Activated CD4-positive, alpha-beta memory T cell treated with anti-CD3 and anti-CD28 coated beads, Interleukin-2, amount 10 ng/mL, durations not matched to agents 7 days and 5 days (primary cell): ENCODE measurements at regions of chr1 and their contacts with region 1.

Region 1: GRCh38 chr1:150106341-150106740 is 38.8 kb downstream of the VPS45 start:
- DNase-seq: no peak
- H3K4me3 Mint-ChIP-seq: peak overlapping the region; percentile 35
- H3K27ac Mint-ChIP-seq: peak overlapping the region; percentile 80
- H3K4me1 Mint-ChIP-seq: peaks cover 59% of the 10 kb centered on the region
- H3K27me3 Mint-ChIP-seq: no peaks in the 10 kb centered on the region

Region 2: DNA sequence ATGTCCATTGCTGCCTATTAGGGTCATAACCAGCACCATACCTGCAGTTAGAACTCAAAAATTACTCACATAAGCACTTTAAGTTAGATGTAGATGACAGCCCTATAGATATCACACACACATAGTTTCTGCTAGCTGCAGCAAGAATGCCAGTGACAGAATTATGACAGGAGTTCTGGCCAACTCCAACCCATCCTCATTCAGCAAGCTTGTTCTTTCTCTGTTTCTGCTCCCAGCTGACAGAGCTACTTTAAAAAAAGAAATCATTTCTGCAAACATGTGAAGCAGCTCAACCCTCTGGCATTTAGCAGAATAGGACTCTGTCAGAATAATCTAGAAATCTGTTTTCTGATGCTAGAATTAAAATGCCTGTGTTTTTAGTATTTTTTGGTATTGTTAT is 72.0 kb before region 1 on chr1:
- CTCF ChIA-PET with region 1: no interaction called
- POLR2A ChIA-PET with region 1: no interaction called
- DNase-seq: no peak
- H3K4me3 Mint-ChIP-seq: no peak overlapping the region
- H3K27ac Mint-ChIP-seq: no peak overlapping the region
- H3K4me1 Mint-ChIP-seq: no peaks in the 10 kb centered on the region
- H3K27me3 Mint-ChIP-seq: peaks cover 10% of the 10 kb centered on the region

Region 3: DNA sequence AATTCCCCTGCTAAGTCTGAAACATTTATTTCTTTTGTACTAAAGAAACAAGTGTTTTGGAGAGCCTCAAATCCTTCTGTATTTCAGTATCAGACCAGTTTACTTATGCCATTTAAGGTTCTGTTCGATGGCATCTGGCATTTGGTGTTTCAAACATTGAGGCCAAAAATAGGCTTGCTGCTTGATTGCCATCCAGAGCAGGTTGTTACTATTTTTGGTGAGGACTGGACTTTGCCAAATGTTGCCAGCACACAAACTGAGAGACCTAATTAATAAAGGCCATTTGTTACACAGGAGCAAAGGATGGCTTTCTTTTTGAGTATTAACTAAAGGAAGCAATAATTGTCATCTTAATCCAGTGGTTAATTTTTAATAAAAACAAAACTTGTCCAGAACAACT is 12.5 kb before region 1 on chr1:
- CTCF ChIA-PET with region 1: interaction called, 6 read pairs
- POLR2A ChIA-PET with region 1: interaction called, 37 read pairs
- DNase-seq: no peak
- H3K4me3 Mint-ChIP-seq: no peak overlapping the region
- H3K27ac Mint-ChIP-seq: peak overlapping the region; percentile 53
- H3K4me1 Mint-ChIP-seq: peaks cover 39% of the 10 kb centered on the region
- H3K27me3 Mint-ChIP-seq: no peaks in the 10 kb centered on the region

Region 4: GRCh38 chr1:150149271-150150132 is 43.2 kb after region 1 on chr1 and contains the start of gene PLEKHO1:
- CTCF ChIA-PET with region 1: interaction called, 8 read pairs
- POLR2A ChIA-PET with region 1: interaction called, 63 read pairs
- DNase-seq: peak; percentile 87
- H3K4me3 Mint-ChIP-seq: peak within 1 kb of the TSS; percentile 86
- H3K27ac Mint-ChIP-seq: peak within 1 kb of the TSS; percentile 93
- H3K4me1 Mint-ChIP-seq: peaks cover 66% of the 10 kb centered on the region
- H3K27me3 Mint-ChIP-seq: peaks cover 1% of the 10 kb centered on the region
- total RNA-seq, gene PLEKHO1: 89.8 to 92.9 TPM

Region 5: DNA sequence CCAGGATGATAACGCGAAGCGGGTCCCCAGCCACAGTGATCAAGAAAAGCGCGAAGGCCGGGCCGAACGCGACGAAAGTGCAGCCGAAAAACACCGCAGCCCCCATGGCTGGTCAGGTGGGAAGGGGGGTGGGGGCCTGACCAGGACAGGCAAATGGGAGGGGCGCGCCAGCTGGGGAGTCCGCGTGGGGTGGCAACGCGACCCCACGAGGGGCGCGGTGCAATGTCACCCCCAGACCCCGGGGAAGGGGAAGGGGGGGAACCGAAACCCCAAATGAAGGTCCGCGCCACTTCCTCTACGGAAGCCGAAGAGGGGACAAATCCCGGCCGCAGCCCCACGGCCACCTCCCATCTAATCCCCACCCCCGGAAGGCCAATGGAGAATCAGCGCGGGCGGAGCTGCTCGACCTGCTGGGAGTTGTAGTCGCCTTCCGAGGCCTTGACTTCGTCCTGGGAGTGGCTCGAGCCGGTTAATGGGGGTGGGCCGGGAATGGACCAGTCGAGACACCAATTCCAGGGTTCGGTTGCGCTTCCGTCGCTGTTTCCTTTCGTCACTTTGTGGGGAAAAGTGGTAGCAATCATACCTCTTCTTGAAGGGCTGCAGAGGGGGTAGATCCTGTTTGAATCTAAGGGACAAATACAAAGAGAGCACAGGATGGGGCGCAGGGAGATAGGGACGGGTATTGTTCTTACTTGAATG is 162.5 kb after region 1 on chr1 and contains the start of gene APH1A:
- CTCF ChIA-PET with region 1: no interaction called
- POLR2A ChIA-PET with region 1: no interaction called
- DNase-seq: peak; percentile 95
- H3K4me3 Mint-ChIP-seq: peak within 1 kb of the TSS; percentile 91
- H3K27ac Mint-ChIP-seq: peak within 1 kb of the TSS; percentile 94
- H3K4me1 Mint-ChIP-seq: peaks cover 38% of the 10 kb centered on the region
- H3K27me3 Mint-ChIP-seq: no peaks in the 10 kb centered on the region
- total RNA-seq, gene APH1A: 142 to 144 TPM